Activated T-helper 2 cell treated with anti-CD3 and anti-CD28 coated beads, Interferon-gamma antibody, Interleukin-2, Interleukin-4, amounts not matched to agents 10 μg/mL and 5 μg/mL and 100 μg/mL, durations not matched to agents 14 hours and 24 hours and 36 hours (primary cell): ENCODE measurements at regions of chr22 and their contacts with region 1.

Region 1: GRCh38 chr22:19717691-19718455 is 3.6 kb downstream of the SEPTIN5 start:
- DNase-seq: peak; percentile 77
- H3K4me3 Mint-ChIP-seq: peak overlapping the region; percentile 67
- H3K27ac Mint-ChIP-seq: no peak overlapping the region
- H3K4me1 Mint-ChIP-seq: peaks cover 2% of the 10 kb centered on the region
- H3K27me3 Mint-ChIP-seq: peaks cover 47% of the 10 kb centered on the region

Region 2: DNA sequence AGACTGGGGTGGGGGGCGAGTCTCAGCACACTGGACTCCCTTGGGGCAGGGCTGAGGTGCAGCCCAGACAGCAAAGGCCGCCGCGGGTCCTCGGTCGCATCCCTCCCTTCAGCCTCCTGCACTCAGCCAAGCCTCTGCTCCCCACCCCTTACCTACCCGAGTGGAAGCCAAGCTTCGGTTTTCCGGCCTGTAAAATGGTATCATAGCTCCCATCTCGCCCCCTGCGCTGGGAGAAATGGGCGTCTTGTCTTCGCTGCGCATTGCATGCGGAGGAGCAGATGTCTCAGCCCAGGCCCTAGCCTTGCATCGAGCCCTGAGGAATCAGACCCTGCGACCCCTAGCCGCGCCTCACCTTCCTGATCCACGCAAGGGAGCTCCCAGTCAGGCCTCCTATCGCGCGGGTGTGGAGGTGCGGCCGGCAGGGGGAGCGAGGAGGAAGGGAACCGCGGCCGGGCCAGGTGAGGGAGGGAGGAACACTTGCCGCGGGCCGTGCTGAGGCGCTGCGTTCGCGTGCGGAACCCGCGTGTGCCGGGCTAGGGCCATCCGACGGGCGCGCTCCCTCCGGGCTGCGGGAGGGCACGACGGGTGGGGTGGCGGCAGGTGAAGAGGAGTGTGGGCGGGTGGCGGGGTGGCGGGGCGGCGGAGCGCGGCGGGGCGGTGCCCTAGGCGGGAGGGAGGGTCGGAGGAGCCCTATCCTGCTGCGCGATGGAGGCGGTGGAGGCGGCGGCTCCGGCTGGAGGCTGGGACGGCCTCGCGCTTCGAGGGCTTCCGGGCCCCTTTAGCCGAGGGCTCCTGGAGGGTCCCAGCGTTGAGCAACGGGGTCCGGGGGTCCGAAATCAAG is 38.6 kb after region 1 on chr22:
- intact Hi-C with region 1: loop called (anchors 5 kb)
- DNase-seq: peak; percentile 53
- H3K4me3 Mint-ChIP-seq: no peak overlapping the region
- H3K27ac Mint-ChIP-seq: no peak overlapping the region
- H3K4me1 Mint-ChIP-seq: peaks cover 17% of the 10 kb centered on the region
- H3K27me3 Mint-ChIP-seq: peaks cover 56% of the 10 kb centered on the region

Region 3: GRCh38 chr22:19929586-19930550 is 212.0 kb after region 1 on chr22:
- intact Hi-C with region 1: no loop called
- DNase-seq: no peak
- H3K4me3 Mint-ChIP-seq: no peak overlapping the region
- H3K27ac Mint-ChIP-seq: no peak overlapping the region
- H3K4me1 Mint-ChIP-seq: peaks cover 2% of the 10 kb centered on the region
- H3K27me3 Mint-ChIP-seq: no peaks in the 10 kb centered on the region